ENCODE measurements at regions of chr9 and their contacts with region 1.

Region 1: GRCh38 chr9:96169484-96169883 is 132.5 kb downstream of the HSD17B3 start:
- DNase-seq: no peak
- H3K4me3 ChIP-seq: no peak overlapping the region
- CTCF ChIP-seq: no peak

Region 2: GRCh38 chr9:95409650-95410426 is 759.6 kb before region 1 on chr9:
- in situ Hi-C with region 1: no loop called
- DNase-seq: peak; percentile 72
- H3K4me3 ChIP-seq: no peak overlapping the region
- CTCF ChIP-seq: no peak

Region 3: DNA sequence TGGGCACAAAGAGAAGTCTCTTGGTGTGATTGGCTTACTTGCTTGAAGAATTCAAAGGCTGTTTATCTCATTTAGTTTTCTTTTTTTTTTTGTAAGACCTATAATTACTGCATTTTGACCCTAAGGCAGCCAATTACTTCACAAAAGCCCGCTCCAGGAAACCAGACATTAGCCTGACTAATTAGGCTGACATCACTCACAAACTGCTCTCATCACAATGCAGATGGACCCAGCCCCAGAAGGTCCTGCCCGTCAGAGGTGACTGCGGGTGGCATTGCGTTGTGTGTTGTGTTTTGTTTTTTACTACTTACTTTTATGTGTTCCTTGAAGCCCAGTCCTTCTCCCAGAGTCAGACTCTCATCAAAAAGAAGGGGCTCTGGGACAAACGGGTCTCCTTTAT is 39.8 kb before region 1 on chr9:
- in situ Hi-C with region 1: loop called (anchors 5 kb)
- DNase-seq: no peak
- H3K4me3 ChIP-seq: no peak overlapping the region
- CTCF ChIP-seq: no peak